ENCODE measurements at regions of chr7 and their contacts with region 1.

Region 1: DNA sequence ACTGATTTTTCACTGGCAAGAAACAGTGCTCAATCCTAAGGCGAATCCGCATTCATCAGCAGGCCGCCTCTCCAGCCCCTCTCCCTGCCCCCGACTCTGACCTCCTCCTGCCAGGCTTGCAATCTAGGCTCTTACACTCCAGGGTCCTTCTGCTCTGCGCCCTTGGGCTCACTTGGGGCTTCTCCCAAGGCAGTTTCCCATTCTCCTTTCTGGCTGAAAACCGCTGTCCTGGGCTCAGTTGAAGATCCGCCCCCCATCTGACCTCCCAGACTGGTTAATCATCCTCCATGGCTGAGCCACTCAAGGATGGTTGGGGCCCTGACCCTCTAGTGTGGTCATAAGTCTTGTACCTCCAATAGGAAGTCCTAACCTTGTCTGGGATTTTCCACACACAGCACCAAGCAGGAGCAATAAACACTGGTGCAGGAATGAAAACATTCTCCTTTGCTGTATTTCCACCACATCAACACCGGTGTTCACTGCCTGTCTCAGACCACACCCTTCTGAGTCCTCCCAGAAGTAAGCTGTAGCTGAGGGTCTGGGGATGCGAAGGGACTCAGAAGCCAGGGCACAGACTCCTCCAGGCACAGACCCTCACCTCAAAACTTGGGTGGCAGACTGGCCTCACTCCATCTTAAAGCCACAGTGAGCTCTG is 42.4 kb downstream of the TNS3 start:
- DNase-seq: no peak
- ATAC-seq: no peak
- H3K4me3 ChIP-seq: no peak overlapping the region
- H3K27ac ChIP-seq: no peak overlapping the region
- H3K4me1 ChIP-seq: peaks cover 6% of the 10 kb centered on the region
- H3K27me3 ChIP-seq: peaks cover 0 to 1% (median 0%) of the 10 kb centered on the region in 3 donors
- CTCF ChIP-seq: no peak

Region 2: DNA sequence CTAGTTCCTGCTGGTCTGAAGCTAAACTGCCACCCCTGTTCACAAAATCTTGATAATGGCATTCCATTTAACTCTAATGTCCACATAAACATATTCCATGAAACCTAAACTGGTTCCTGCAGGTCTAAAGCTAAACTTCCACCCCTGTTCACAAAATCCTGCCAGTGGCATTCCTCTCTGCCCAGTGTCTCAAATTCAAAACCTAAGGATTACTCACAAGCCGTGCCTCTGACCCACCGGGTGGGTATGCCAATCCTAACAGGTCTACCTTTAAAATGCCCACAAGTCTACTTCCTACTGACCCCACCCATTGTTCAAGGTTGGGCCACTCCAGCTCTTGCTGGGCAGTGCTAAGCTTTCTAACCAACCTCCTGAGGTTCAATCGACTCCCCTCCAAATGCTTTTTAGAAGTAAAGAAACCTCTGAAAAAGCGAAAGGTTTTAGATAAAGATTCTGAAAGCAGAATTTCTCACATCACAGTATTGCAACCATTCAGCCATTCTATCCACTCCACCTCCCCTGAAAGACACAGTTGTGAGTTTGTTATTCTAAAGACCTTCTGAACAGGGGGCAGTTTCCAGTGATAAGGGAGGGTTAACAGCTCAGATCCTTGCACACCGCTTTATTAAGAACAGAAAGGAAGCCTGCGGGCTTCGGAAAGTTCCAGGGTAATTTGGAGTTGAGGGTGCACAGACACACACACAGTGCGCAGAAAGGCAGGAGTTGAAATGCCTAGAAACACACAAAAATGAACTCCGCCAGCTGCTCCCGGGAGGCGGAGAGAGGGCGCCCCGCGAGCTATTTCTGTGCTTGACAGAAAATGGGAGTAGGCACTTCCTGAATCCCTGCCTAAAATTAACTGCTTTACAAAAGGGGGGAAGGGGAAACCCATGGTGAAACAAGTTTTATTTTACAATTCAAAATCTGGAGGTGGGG is 45.3 kb before region 1 on chr7:
- intact Hi-C with region 1: loop called in 1 of 2 experiments (anchors 5 kb)
- DNase-seq: no peak
- ATAC-seq: no peak
- H3K4me3 ChIP-seq: no peak overlapping the region
- H3K27ac ChIP-seq: no peak overlapping the region
- H3K4me1 ChIP-seq: peaks cover 17% of the 10 kb centered on the region
- H3K27me3 ChIP-seq: no peaks in the 10 kb centered on the region
- CTCF ChIP-seq: no peak

Region 3: DNA sequence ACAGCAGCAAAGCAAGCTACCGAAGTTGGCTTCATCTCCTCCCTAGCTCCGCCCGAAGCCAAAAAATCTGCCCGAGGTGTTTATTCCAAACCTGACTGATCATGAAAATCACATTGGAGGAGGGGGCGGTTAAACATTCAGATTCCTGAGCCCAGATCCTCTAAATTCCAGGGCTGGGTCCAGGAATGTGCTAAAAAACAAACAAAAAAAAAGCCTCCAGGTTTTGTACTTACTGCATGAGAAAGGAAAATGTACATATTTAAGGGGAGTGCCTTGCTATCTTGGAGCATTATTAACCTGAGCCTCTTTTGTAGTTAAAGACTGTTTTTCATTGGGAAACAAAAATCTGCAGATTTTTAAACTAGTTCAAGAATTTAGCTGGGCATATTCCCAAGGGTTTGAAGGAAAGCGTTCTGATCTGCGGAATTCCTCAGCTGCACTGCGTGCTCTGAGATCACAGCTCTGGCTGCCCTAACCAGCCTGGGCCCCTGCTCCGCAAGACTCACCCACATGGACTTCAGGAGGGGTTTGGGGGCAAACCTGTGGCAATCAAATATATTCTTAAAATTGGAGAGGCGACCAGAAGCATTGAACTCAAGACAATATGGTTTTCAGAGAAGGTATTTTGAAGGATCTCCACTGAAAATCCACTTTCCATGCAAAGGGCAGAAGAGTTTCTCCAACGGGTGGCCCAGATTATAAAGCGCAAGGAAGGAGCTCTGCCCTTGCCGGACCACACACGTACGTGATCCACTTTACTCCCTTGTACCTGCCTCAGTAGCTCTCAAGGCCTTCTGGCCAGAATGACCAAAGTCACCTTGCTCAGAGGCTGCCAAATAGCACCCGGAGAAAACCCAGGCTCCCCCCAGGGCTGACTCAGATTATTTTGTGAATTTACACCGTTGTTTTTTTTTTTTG is 52.4 kb after region 1 on chr7:
- intact Hi-C with region 1: no loop called
- DNase-seq: no peak
- ATAC-seq: no peak
- H3K4me3 ChIP-seq: no peak overlapping the region
- H3K27ac ChIP-seq: no peak overlapping the region
- H3K4me1 ChIP-seq: no peaks in the 10 kb centered on the region
- H3K27me3 ChIP-seq: no peaks in the 10 kb centered on the region
- CTCF ChIP-seq: no peak

Measured in psoas muscle (tissue), 8 donors.